T-cell (primary cell): ENCODE measurements at regions of chr1 and their contacts with region 1.

Region 1: GRCh38 chr1:225777583-225778336 is at the start of gene SRP9:
- DNase-seq: peak; percentile 97 to 100 (median 99)
- ATAC-seq: peak; percentile 94 to 96 (median 96)
- H3K4me3 ChIP-seq: peak within 1 kb of the TSS; percentile 72 to 98
- H3K4me3 Mint-ChIP-seq: no peak within 1 kb of the TSS
- H3K27ac ChIP-seq: peak within 1 kb of the TSS; percentile 99
- H3K27ac Mint-ChIP-seq: no peak within 1 kb of the TSS
- H3K4me1 ChIP-seq: peaks cover 26 to 43% of the 10 kb centered on the region in 2 experiments
- H3K4me1 Mint-ChIP-seq: peaks cover 42 to 47% (median 47%) of the 10 kb centered on the region in 3 donors
- H3K27me3 ChIP-seq: no peaks in the 10 kb centered on the region
- H3K27me3 Mint-ChIP-seq: no peaks in the 10 kb centered on the region
- total RNA-seq, gene SRP9: 74.1 to 152 (median 137) TPM

Region 2: GRCh38 chr1:225881969-225882693 is 104.4 kb after region 1 on chr1 and contains the start of gene TMEM63A:
- CTCF ChIA-PET with region 1: interaction called in 1 of 2 experiments, 18 read pairs
- POLR2A ChIA-PET with region 1: interaction called in 1 of 2 experiments, 7 read pairs
- DNase-seq: peak; percentile 69 to 94 (median 86)
- ATAC-seq: peak; percentile 71 to 77 (median 74)
- H3K4me3 ChIP-seq: peak within 1 kb of the TSS; percentile 86 to 100
- H3K4me3 Mint-ChIP-seq: peak within 1 kb of the TSS; percentile 87 to 95 (median 91)
- H3K27ac ChIP-seq: peak within 1 kb of the TSS; percentile 80
- H3K27ac Mint-ChIP-seq: peak within 1 kb of the TSS; percentile 94 to 97
- H3K4me1 ChIP-seq: peaks cover 35 to 55% of the 10 kb centered on the region in 2 experiments
- H3K4me1 Mint-ChIP-seq: peaks cover 50% of the 10 kb centered on the region in 3 donors
- H3K27me3 ChIP-seq: no peaks in the 10 kb centered on the region
- H3K27me3 Mint-ChIP-seq: no peaks in the 10 kb centered on the region
- total RNA-seq, gene TMEM63A: 332 to 473 (median 390) TPM

Region 3: DNA sequence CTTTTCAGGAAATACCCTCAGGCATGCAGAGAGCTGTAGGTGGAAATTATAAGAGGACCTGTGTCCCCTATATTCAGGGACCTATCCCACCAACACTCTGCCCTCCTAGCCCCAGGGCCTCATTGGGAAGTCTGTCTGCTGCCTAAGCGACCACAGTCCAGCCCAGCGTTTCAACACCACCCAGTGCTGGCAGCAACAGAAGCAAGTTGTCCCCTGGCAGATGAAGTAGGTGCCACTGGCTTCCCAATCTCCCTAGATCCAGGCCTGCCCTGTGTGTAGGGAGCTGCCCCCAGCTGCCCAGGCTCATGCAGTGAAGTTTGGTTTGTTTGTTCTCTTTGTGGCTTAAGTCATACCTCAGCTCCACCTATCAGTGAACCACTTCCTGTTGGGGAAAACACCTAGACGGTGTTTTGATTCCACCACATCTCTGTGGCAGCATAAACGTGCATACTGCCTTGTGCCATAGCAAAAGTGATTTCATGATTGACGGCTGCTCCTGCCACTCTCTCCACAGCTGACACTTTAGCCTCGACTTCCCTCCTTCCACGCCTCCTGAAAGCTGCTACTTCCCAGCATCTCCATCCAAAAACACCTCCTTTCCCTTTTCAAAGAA is 119.3 kb after region 1 on chr1:
- CTCF ChIA-PET with region 1: interaction called in 1 of 2 experiments, 16 read pairs
- POLR2A ChIA-PET with region 1: interaction called in 1 of 2 experiments, 9 read pairs
- DNase-seq: peak; percentile 45 to 94 (median 71)
- ATAC-seq: peak; percentile 92 to 96 (median 94)
- H3K4me3 ChIP-seq: peak overlapping the region; percentile 15 to 51
- H3K4me3 Mint-ChIP-seq: peak overlapping the region; percentile 52 to 85 (median 63)
- H3K27ac ChIP-seq: peak overlapping the region; percentile 85
- H3K27ac Mint-ChIP-seq: peak overlapping the region; percentile 95 to 97
- H3K4me1 ChIP-seq: peaks cover 34 to 43% of the 10 kb centered on the region in 2 experiments
- H3K4me1 Mint-ChIP-seq: peaks cover 53 to 66% (median 56%) of the 10 kb centered on the region in 3 donors
- H3K27me3 ChIP-seq: no peaks in the 10 kb centered on the region
- H3K27me3 Mint-ChIP-seq: no peaks in the 10 kb centered on the region

Region 4: GRCh38 chr1:225923692-225924555 is 146.2 kb after region 1 on chr1 and contains the start of gene PYCR2:
- CTCF ChIA-PET with region 1: interaction called in 1 of 2 experiments, 10 read pairs
- POLR2A ChIA-PET with region 1: interaction called, 3 to 5 read pairs
- DNase-seq: peak; percentile 81 to 97 (median 92)
- ATAC-seq: peak; percentile 97 to 99 (median 98)
- H3K4me3 ChIP-seq: peak within 1 kb of the TSS; percentile 87 to 90
- H3K4me3 Mint-ChIP-seq: peak within 1 kb of the TSS; percentile 92 to 95 (median 93)
- H3K27ac ChIP-seq: peak within 1 kb of the TSS; percentile 74
- H3K27ac Mint-ChIP-seq: peak within 1 kb of the TSS; percentile 93 to 95
- H3K4me1 ChIP-seq: peaks cover 30 to 71% of the 10 kb centered on the region in 2 experiments
- H3K4me1 Mint-ChIP-seq: peaks cover 57 to 66% (median 61%) of the 10 kb centered on the region in 3 donors
- H3K27me3 ChIP-seq: no peaks in the 10 kb centered on the region
- H3K27me3 Mint-ChIP-seq: no peaks in the 10 kb centered on the region
- total RNA-seq, gene PYCR2: 54.4 to 138 (median 126) TPM